ENCODE measurements at regions of chr17 and their contacts with region 1.

Region 1: GRCh38 chr17:15490634-15491261 is 23.3 kb upstream of the CDRT4 start:
- DNase-seq: peak; percentile 82 to 94 (median 86)
- ATAC-seq: peak; percentile 99
- H3K4me3 ChIP-seq: no peak overlapping the region
- H3K27ac ChIP-seq: peak overlapping the region; percentile 93
- H3K4me1 ChIP-seq: peaks cover 17 to 30% of the 10 kb centered on the region in 2 experiments
- H3K27me3 ChIP-seq: no peaks in the 10 kb centered on the region
- CTCF ChIP-seq: peak in 1 of 3 experiments; percentile 2; a peak in 1 of 6 replicates
- EP300 ChIP-seq: peak; percentile 88
- POLR2A ChIP-seq: no peak
- RAD21 ChIP-seq: no peak

Region 2: DNA sequence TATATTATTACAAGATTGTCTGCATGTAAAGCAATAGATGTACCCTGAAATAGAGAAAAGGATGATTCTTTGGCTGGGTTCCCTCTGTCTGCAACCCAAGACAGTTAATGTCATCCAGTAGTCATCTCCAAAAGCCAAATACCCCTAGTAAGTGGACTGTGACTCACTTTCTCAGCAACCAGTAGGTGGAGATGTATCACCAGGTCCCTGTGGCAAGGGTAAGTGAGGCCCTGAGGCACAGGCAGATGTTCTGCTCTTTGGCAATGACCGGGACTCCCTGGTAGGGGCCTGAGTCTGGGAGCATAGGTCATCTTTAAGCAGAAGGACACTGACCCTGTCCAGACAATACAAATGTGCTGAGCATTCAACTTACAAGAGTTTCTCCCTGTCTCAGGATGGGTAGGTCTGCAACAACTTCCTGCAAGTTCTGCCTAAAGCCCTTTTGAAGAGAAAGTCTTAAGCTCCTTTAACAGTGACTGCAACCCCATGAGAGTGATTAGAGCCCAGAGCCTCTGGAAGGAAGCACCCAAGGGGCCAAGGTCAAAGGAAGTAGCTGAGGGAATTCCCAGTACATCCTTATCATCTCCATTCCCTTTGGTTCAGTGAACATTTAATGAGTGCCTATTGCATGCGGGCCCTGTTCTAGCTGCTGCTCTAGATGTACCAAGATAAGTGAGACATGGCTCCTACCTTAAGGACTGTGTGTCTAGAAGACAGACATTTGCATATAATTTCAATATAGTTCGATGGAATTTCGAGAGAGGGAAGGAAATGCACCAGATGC is 257.5 kb before region 1 on chr17:
- CTCF ChIA-PET with region 1: no interaction called
- POLR2A ChIA-PET with region 1: no interaction called
- in situ Hi-C with region 1: no loop called
- intact Hi-C with region 1: loop called (anchors 10 kb)
- DNase-seq: peak; percentile 32 to 60 (median 44)
- ATAC-seq: peak; percentile 82
- H3K4me3 ChIP-seq: no peak overlapping the region
- H3K27ac ChIP-seq: no peak overlapping the region
- H3K4me1 ChIP-seq: peaks cover 4 to 56% of the 10 kb centered on the region in 2 experiments; a peak in 4 of 5 replicates
- H3K27me3 ChIP-seq: no peaks in the 10 kb centered on the region
- CTCF ChIP-seq: peak; percentile 53 to 59 (median 58); a peak in 5 of 6 replicates
- EP300 ChIP-seq: no peak
- POLR2A ChIP-seq: no peak
- RAD21 ChIP-seq: peak; percentile 57 to 68

Region 3: GRCh38 chr17:15444805-15445204 is 45.9 kb before region 1 on chr17:
- CTCF ChIA-PET with region 1: no interaction called
- POLR2A ChIA-PET with region 1: no interaction called
- in situ Hi-C with region 1: no loop called
- intact Hi-C with region 1: loop called (anchors 10 kb)
- DNase-seq: peak; percentile 20 to 46 (median 36)
- ATAC-seq: peak; percentile 49
- H3K4me3 ChIP-seq: no peak overlapping the region
- H3K27ac ChIP-seq: no peak overlapping the region
- H3K4me1 ChIP-seq: peaks cover 0 to 19% of the 10 kb centered on the region in 2 experiments; a peak in 3 of 5 replicates
- H3K27me3 ChIP-seq: no peaks in the 10 kb centered on the region
- CTCF ChIP-seq: no peak
- EP300 ChIP-seq: 0 out of 2 replicates have a peak, but pooled peaks have one; percentile 27
- POLR2A ChIP-seq: no peak
- RAD21 ChIP-seq: no peak